Panc1 (cell line): ENCODE measurements at regions of chrX and their contacts with region 1.

Region 1: DNA sequence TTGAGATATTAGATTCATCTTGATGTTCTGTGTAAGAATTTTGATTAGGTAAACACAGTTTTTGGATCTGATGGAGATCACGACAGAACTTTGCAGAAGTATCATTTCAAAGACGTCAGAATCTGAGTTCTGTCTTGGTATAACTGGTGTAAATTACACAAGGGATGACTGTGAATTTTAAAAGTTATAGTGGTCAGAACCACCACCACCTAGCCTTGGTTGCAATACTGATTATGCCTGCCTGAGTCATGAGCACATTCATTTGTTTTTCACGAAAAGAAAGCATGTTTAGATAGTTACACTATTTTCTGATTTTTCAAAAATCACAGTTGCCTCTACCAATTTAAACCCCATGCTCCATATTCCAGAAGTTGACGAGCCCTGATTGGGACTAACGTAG is 54.8 kb downstream of the ZFX start:
- DNase-seq: no peak
- ATAC-seq: no peak
- H3K4me3 ChIP-seq: no peak overlapping the region
- H3K27ac ChIP-seq: no peak overlapping the region
- H3K4me1 ChIP-seq: no peaks in the 10 kb centered on the region
- H3K27me3 ChIP-seq: no peaks in the 10 kb centered on the region
- CTCF ChIP-seq: no peak

Region 2: DNA sequence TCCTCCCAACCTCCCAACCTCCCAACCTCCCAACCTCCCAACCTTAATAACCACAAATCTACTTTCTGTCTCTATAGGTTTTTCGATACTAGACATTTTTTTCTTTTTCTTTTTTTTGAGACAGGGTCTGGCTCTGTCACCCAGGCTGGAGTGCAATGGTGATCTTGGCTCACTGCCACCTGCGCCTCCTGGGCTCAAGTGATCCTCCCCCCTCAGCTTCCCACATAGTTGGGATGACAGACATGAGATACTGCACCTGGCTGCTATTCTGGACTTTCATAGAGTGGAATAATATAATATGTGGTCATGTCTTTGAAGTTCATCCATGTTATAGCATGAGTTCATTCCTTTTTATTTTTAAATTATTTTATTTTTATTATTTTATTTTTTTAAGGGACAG is 94.3 kb before region 1 on chrX:
- CTCF ChIA-PET with region 1: no interaction called
- POLR2A ChIA-PET with region 1: interaction called, 13 read pairs
- in situ Hi-C with region 1: no loop called
- intact Hi-C with region 1: no loop called
- DNase-seq: no peak
- ATAC-seq: no peak
- H3K4me3 ChIP-seq: no peak overlapping the region
- H3K27ac ChIP-seq: no peak overlapping the region
- H3K4me1 ChIP-seq: no peaks in the 10 kb centered on the region
- H3K27me3 ChIP-seq: no peaks in the 10 kb centered on the region
- CTCF ChIP-seq: no peak

Region 3: DNA sequence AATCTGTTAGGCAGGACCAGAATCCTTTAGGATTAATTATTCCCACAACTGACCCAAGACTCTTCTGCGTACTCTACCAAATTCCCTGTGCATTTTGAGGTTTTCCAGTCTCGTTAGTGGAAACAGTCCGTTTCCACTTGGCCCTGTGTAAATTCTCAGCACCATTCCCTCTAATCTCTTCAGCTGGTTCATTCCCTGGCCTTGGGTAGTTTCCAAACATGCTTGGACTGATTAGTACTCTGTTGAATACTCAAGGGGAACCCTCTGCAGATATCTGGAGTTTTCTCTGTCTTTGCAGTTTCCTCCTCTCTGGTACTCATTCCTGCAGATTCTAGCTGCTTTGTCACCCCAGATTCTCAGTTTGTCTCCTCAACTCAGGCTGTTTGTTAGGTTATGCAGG is 25.6 kb after region 1 on chrX:
- CTCF ChIA-PET with region 1: no interaction called
- POLR2A ChIA-PET with region 1: no interaction called
- in situ Hi-C with region 1: no loop called
- intact Hi-C with region 1: no loop called
- DNase-seq: no peak
- ATAC-seq: no peak
- H3K4me3 ChIP-seq: no peak overlapping the region
- H3K27ac ChIP-seq: no peak overlapping the region
- H3K4me1 ChIP-seq: no peaks in the 10 kb centered on the region
- H3K27me3 ChIP-seq: no peaks in the 10 kb centered on the region
- CTCF ChIP-seq: no peak

Region 4: DNA sequence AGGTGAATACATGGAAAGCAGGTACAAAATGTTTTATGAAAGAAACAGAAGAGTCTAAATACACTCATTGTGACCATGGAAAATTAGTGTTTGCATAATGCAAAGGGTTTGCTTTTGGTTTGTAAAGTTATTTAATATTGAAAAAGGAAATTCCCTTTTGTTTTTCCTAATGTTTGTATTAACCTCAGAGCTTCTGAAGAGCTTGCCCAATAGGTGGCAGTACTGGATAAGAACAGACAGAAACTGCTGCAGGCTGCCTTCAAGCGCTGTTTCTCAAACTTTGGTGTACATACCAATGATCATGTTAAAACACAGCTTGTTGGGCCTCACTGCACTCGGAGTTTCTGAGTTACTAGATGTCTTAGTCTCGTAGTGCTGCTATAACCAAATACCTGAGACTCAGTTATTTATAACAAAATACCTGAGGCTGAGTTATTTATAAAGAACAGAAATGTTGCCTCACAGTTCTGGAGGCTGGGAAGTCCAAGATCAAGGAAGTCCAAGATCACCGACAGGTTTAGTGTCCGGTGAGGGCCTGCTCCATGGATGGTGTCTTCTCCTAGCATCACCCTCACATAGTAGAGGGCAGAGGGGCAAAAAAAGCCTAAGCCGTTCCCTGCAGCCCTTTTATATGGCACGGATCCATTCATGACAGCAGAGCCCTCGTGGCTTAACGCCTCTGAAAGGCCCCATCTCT is 55.4 kb after region 1 on chrX:
- CTCF ChIA-PET with region 1: no interaction called
- POLR2A ChIA-PET with region 1: no interaction called
- in situ Hi-C with region 1: no loop called
- intact Hi-C with region 1: no loop called
- DNase-seq: no peak
- ATAC-seq: no peak
- H3K4me3 ChIP-seq: no peak overlapping the region
- H3K27ac ChIP-seq: no peak overlapping the region
- H3K4me1 ChIP-seq: no peaks in the 10 kb centered on the region
- H3K27me3 ChIP-seq: no peaks in the 10 kb centered on the region
- CTCF ChIP-seq: peak; percentile 72